ENCODE measurements at regions of chr3 and their contacts with region 1.

Region 1: GRCh38 chr3:71064288-71064955 is 519.1 kb downstream of the FOXP1 start:
- DNase-seq: peak; percentile 63
- ATAC-seq: peak; percentile 80
- H3K4me3 ChIP-seq: peak overlapping the region; percentile 70 to 83 (median 82)
- H3K27ac ChIP-seq: peak overlapping the region; percentile 71
- H3K4me1 ChIP-seq: peaks cover 75% of the 10 kb centered on the region
- H3K27me3 ChIP-seq: no peaks in the 10 kb centered on the region; a peak in 1 of 5 replicates
- CTCF ChIP-seq: no peak
- EP300 ChIP-seq: no peak; a peak in 1 of 4 replicates
- POLR2A ChIP-seq: peak in 1 of 2 experiments; percentile 4; a peak in 1 of 4 replicates
- RAD21 ChIP-seq: no peak

Region 2: DNA sequence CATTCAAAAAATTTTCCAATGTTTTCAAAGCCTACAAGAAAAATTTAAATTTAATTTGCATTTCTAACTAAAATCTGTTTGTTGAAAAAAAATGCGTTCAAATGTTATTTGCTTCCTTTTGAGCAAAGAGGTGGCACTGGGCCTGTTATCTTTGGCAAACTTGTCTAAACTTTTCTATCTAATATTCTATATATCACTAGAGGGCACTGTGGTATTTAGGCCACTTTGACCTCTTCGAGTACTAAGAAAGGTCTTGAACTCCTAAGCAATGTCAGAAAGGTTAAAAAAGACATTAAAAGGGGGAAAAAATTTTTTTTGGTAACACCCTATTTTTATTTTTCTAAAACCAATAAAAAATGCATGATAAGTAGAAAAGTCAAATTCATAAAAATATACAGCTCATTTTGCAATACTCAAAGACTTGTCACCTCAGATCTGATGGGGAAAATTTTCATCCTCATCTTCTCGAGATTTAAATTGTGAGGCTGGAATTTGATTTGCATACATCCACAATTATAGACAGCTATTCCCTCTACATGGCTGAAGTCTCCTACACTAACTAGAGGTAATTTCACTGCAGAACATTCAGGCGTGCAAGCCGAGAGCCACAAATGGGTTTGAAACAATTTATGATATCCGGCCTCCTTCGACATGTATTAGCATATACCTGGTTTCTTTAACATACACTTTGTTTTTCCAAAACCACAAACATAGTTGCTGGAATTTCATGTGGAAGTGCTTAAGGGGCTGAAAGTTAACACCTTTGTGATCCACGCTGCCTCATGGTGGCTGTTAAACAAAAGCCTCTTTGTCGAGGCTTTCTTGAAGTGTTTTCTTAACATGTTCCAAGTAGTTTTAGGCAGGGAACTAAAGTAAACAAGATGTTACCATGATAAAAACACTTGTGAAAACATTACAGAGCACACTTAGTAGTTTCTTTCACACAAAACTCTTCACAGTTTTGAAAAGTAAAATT is 57.3 kb before region 1 on chr3:
- CTCF ChIA-PET with region 1: interaction called, 11 read pairs
- POLR2A ChIA-PET with region 1: no interaction called
- in situ Hi-C with region 1: no loop called
- intact Hi-C with region 1: loop called (anchors 5 kb)
- DNase-seq: peak; percentile 20
- ATAC-seq: peak; percentile 75
- H3K4me3 ChIP-seq: no peak overlapping the region
- H3K27ac ChIP-seq: no peak overlapping the region
- H3K4me1 ChIP-seq: peaks cover 49% of the 10 kb centered on the region
- H3K27me3 ChIP-seq: no peaks in the 10 kb centered on the region
- CTCF ChIP-seq: peak; percentile 53
- EP300 ChIP-seq: no peak
- POLR2A ChIP-seq: no peak
- RAD21 ChIP-seq: peak; percentile 33; the same call in 1 of the 2 replicates

Region 3: DNA sequence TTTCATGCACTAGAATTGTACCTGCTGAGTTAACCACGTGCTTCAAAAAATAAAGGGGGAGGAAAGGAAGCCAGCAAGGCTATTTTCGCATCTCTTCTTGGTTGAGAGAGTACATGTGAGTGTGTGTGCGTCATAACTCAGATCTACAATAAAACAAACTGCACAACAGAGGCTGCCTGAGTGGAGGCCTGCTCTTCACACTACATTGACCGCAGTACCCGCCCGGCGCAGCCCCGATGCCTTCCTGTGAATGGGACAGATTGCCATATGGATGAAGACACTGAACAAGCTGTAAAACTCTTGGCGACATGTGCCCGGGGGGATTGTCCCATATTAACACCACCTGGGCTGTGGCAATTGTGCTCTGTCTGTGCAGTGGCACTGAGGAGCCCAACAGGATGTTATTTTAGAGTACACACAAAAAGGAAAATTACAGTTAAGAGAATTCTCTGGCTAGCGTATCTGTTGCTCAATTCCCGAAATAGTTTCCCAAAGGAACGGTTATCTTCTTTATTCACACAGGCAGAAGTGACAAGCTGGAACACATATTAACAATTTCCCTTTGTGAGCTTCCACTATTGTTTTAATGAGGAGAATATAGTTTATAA is 32.4 kb before region 1 on chr3:
- CTCF ChIA-PET with region 1: no interaction called
- POLR2A ChIA-PET with region 1: no interaction called
- in situ Hi-C with region 1: no loop called
- intact Hi-C with region 1: no loop called
- DNase-seq: no peak
- ATAC-seq: no peak
- H3K4me3 ChIP-seq: no peak overlapping the region
- H3K27ac ChIP-seq: no peak overlapping the region
- H3K4me1 ChIP-seq: peaks cover 38% of the 10 kb centered on the region
- H3K27me3 ChIP-seq: no peaks in the 10 kb centered on the region
- CTCF ChIP-seq: no peak
- EP300 ChIP-seq: no peak
- POLR2A ChIP-seq: no peak
- RAD21 ChIP-seq: no peak

Region 4: GRCh38 chr3:71050538-71051258 is 13.7 kb before region 1 on chr3:
- CTCF ChIA-PET with region 1: no interaction called
- POLR2A ChIA-PET with region 1: interaction called, 65 read pairs
- in situ Hi-C with region 1: no loop called
- intact Hi-C with region 1: no loop called
- DNase-seq: peak; percentile 61
- ATAC-seq: peak; percentile 8; the same call in 1 of the 3 replicates
- H3K4me3 ChIP-seq: no peak overlapping the region
- H3K27ac ChIP-seq: peak overlapping the region; percentile 65
- H3K4me1 ChIP-seq: peaks cover 73% of the 10 kb centered on the region
- H3K27me3 ChIP-seq: no peaks in the 10 kb centered on the region
- CTCF ChIP-seq: no peak
- EP300 ChIP-seq: peak in 1 of 2 experiments; percentile 30; a peak in 1 of 4 replicates
- POLR2A ChIP-seq: no peak
- RAD21 ChIP-seq: no peak

Region 5: GRCh38 chr3:71087143-71088018 is 23.0 kb after region 1 on chr3:
- CTCF ChIA-PET with region 1: no interaction called
- POLR2A ChIA-PET with region 1: interaction called, 21 read pairs
- in situ Hi-C with region 1: no loop called
- intact Hi-C with region 1: no loop called
- DNase-seq: peak; percentile 83
- ATAC-seq: peak; percentile 62
- H3K4me3 ChIP-seq: peak overlapping the region in 2 of 3 experiments; percentile 10 to 11; a peak in 1 of 6 replicates
- H3K27ac ChIP-seq: peak overlapping the region; percentile 65
- H3K4me1 ChIP-seq: peaks cover 71% of the 10 kb centered on the region
- H3K27me3 ChIP-seq: no peaks in the 10 kb centered on the region
- CTCF ChIP-seq: no peak
- EP300 ChIP-seq: peak in 1 of 2 experiments; percentile 80; a peak in 2 of 4 replicates
- POLR2A ChIP-seq: no peak
- RAD21 ChIP-seq: no peak

Region 6: GRCh38 chr3:71149959-71150954 is 85.8 kb after region 1 on chr3:
- CTCF ChIA-PET with region 1: no interaction called
- POLR2A ChIA-PET with region 1: no interaction called
- in situ Hi-C with region 1: no loop called
- intact Hi-C with region 1: loop called (anchors 10 kb)
- DNase-seq: no peak
- ATAC-seq: no peak
- H3K4me3 ChIP-seq: no peak overlapping the region
- H3K27ac ChIP-seq: no peak overlapping the region
- H3K4me1 ChIP-seq: peaks cover 50% of the 10 kb centered on the region
- H3K27me3 ChIP-seq: no peaks in the 10 kb centered on the region
- CTCF ChIP-seq: no peak
- EP300 ChIP-seq: no peak
- POLR2A ChIP-seq: no peak
- RAD21 ChIP-seq: no peak

Measured in HepG2 (cell line).